ENCODE measurements at regions of chr20 and their contacts with region 1.

Region 1: DNA sequence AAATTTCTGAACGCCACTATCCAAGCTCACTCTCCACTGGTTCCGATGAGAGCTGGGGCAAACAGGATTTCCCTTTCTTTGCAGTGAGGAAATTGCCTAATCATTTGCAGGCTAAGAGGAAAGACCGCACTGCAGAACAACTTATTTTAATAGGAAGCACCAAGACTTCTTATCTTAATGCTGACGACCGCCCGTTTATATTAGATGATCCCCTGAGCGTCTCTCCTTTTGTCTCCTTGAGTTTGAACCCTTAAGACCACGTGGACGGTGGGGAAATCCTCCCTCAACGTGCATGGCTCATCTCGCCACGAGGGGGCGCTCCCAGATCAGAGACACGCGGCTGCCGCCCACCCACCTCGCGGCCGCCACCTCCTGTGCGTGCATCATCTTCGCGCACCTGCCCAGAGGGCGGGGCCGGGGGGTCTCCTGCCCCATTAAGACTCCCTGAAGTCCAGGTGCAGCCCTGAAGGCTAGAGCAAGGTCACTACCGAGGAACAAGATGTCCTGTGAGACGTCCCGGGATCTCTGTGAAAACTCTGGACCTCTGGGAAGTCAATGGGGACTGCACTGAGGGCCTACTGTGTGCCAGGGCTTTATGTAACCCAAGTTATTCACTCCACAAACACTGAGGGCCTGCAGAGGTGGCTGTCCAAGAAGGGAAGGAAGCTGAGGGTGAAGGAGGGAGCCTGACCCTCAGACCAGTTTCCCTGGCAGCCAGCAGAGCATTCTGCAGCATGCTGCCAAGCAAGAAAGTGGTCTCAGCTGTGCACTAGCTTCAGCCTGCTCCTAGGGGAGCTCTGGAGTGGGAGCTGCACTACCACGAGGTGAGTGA is 28.1 kb downstream of the PDYN start:
- DNase-seq: peak; percentile 73 to 96
- H3K4me3 ChIP-seq: peak overlapping the region in 1 of 4 experiments; percentile 50; a peak in 4 of 8 replicates
- H3K27ac ChIP-seq: no peak overlapping the region
- H3K4me1 ChIP-seq: peaks cover 4 to 17% (median 11%) of the 10 kb centered on the region in 4 experiments; a peak in 6 of 7 replicates
- H3K27me3 ChIP-seq: peaks cover 0 to 4% (median 0%) of the 10 kb centered on the region in 4 experiments; a peak in 2 of 7 replicates
- CTCF ChIP-seq: peak; percentile 85 to 93 (median 91)
- EP300 ChIP-seq: peak in 1 of 2 experiments; percentile 20; a peak in 1 of 3 replicates
- POLR2A ChIP-seq: no peak
- RAD21 ChIP-seq: peak; percentile 93 to 95

Region 2: GRCh38 chr20:1900321-1900801 is 65.4 kb before region 1 on chr20:
- CTCF ChIA-PET with region 1: interaction called, 14 read pairs
- POLR2A ChIA-PET with region 1: interaction called, 3 read pairs
- DNase-seq: peak; percentile 65 to 73
- H3K4me3 ChIP-seq: no peak overlapping the region
- H3K27ac ChIP-seq: no peak overlapping the region
- H3K4me1 ChIP-seq: peaks cover 3 to 23% (median 9%) of the 10 kb centered on the region in 4 experiments
- H3K27me3 ChIP-seq: peaks cover 5 to 20% (median 18%) of the 10 kb centered on the region in 4 experiments
- CTCF ChIP-seq: peak; percentile 71 to 87 (median 84)
- EP300 ChIP-seq: 0 out of 3 replicates have a peak, but pooled peaks of 1 of the 2 experiments have one; percentile 25
- POLR2A ChIP-seq: no peak
- RAD21 ChIP-seq: peak; percentile 57 to 76

Region 3: GRCh38 chr20:1952737-1953530 is 12.8 kb before region 1 on chr20:
- CTCF ChIA-PET with region 1: interaction called, 51 read pairs
- POLR2A ChIA-PET with region 1: interaction called, 9 read pairs
- DNase-seq: no peak
- H3K4me3 ChIP-seq: no peak overlapping the region
- H3K27ac ChIP-seq: no peak overlapping the region
- H3K4me1 ChIP-seq: peaks cover 4 to 22% (median 10%) of the 10 kb centered on the region in 4 experiments; a peak in 6 of 7 replicates
- H3K27me3 ChIP-seq: peaks cover 0 to 8% (median 5%) of the 10 kb centered on the region in 4 experiments; a peak in 4 of 7 replicates
- CTCF ChIP-seq: no peak
- EP300 ChIP-seq: no peak
- POLR2A ChIP-seq: no peak
- RAD21 ChIP-seq: no peak

Region 4: DNA sequence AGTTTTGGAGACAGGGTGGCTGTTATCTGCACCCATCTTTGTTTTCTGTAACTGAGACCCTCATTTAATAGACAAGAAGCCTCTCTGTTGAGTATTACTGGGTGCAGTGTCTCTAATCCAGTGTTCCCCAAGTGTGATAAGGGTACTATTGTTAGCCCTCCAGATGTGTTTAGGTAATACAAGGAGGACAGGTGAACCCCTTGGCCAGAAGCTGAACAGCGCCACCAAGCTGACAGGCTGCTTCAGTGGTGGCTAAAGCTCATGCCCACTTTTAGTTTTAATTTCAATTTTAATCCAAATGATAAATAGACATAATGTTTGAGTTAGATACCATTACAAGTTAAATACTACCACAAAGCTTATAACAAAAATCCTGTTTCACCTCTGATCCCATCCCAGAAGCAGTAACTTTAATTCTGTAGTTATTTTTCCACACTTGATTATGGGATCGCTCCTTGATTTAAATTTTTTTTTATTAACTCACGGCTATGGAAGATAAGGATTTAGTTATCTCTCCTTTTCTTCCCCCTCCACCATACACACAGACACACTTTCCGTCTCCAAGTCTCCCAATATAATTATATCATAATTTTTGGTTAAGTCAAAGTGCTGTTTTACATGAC is 127.5 kb after region 1 on chr20:
- CTCF ChIA-PET with region 1: interaction called, 57 read pairs
- POLR2A ChIA-PET with region 1: interaction called, 3 read pairs
- DNase-seq: peak in 1 of 2 experiments; percentile 58
- H3K4me3 ChIP-seq: no peak overlapping the region
- H3K27ac ChIP-seq: no peak overlapping the region
- H3K4me1 ChIP-seq: peaks cover 0 to 10% (median 7%) of the 10 kb centered on the region in 4 experiments; a peak in 4 of 7 replicates
- H3K27me3 ChIP-seq: no peaks in the 10 kb centered on the region; a peak in 1 of 7 replicates
- CTCF ChIP-seq: peak; percentile 82 to 89 (median 86)
- EP300 ChIP-seq: no peak
- POLR2A ChIP-seq: no peak
- RAD21 ChIP-seq: peak; percentile 91 to 94